CD8-positive, alpha-beta T cell (primary cell): ENCODE measurements at regions of chr11 and their contacts with region 1.

Region 1: GRCh38 chr11:83471831-83472727 is 185.9 kb upstream of the CCDC90B start:
- DNase-seq: no peak
- ATAC-seq: no peak
- H3K4me3 ChIP-seq: no peak overlapping the region
- H3K4me3 Mint-ChIP-seq: no peak overlapping the region
- H3K27ac ChIP-seq: no peak overlapping the region
- H3K27ac Mint-ChIP-seq: no peak overlapping the region
- H3K4me1 ChIP-seq: no peaks in the 10 kb centered on the region
- H3K4me1 Mint-ChIP-seq: no peaks in the 10 kb centered on the region
- H3K27me3 ChIP-seq: no peaks in the 10 kb centered on the region
- H3K27me3 Mint-ChIP-seq: peaks cover 4% of the 10 kb centered on the region
- CTCF ChIP-seq: no peak

Region 2: GRCh38 chr11:83537131-83537610 is 65.1 kb after region 1 on chr11:
- CTCF ChIA-PET with region 1: no interaction called
- POLR2A ChIA-PET with region 1: no interaction called
- intact Hi-C with region 1: loop called in 1 of 2 experiments (anchors 10 kb)
- DNase-seq: no peak
- ATAC-seq: no peak
- H3K4me3 ChIP-seq: no peak overlapping the region
- H3K4me3 Mint-ChIP-seq: no peak overlapping the region
- H3K27ac ChIP-seq: no peak overlapping the region
- H3K27ac Mint-ChIP-seq: no peak overlapping the region
- H3K4me1 ChIP-seq: no peaks in the 10 kb centered on the region
- H3K4me1 Mint-ChIP-seq: no peaks in the 10 kb centered on the region
- H3K27me3 ChIP-seq: no peaks in the 10 kb centered on the region
- H3K27me3 Mint-ChIP-seq: peaks cover 2% of the 10 kb centered on the region
- CTCF ChIP-seq: no peak